GM10248 (cell line): ENCODE measurements at regions of chr15 and their contacts with region 1.

Region 1: DNA sequence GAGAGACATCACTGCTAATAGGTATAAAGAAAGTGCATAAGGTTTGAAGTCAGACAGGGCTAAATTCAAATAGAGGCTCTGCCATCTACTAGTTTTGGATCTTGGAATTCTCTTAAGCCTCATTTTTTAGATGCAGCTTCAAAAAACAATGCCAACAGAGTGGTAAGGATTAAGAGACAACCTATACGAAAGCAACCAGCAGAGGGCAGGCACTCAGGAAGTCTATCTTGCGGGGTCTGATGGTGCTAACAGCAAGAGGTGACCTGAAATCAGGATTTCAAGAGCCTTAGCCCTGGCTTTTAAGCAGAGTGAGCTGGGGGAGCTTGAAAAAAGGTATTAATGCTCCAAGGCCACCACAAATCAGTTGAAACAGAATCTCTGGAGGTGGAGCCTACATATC is 40.7 kb downstream of the LDHAL6B start:
- DNase-seq: no peak
- CTCF ChIP-seq: peak; percentile 54

Region 2: GRCh38 chr15:59199626-59200465 is 47.5 kb before region 1 on chr15:
- CTCF ChIA-PET with region 1: no interaction called
- POLR2A ChIA-PET with region 1: no interaction called
- DNase-seq: no peak
- CTCF ChIP-seq: no peak

Region 3: GRCh38 chr15:59237119-59237855 is 10.1 kb before region 1 on chr15:
- CTCF ChIA-PET with region 1: interaction called, 18 read pairs
- POLR2A ChIA-PET with region 1: no interaction called
- DNase-seq: peak; percentile 50
- CTCF ChIP-seq: no peak

Region 4: DNA sequence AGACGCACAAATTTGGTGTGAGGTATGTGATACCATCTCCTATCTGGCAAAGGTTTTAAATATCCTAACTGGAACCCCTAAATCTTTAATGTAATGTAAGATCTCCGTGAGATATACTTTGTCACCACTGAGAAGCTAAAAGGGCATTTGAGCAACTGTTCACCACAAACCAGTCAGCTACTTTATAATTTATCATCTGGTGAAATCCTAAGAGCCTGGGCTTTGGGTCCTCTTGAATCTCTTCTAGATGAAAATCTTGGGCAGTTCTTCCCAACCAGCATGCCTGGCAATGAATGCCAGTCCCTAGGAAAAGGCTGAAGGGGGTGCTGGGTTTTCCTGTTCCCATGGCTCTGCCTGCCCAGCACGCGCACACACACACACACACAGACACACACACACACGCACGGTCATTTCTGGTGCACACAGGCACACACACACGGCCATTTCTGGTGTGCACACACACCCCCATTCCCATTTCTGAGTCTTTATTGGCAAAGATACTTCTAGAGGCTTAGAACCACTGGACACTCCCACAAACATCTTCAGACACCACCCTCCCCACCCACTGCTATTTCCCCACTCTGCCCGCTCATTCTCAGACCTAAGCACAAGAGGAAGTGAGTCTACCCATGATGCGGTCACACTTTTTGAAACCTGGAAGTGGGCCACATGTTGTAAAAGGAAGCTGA is 52.7 kb after region 1 on chr15:
- CTCF ChIA-PET with region 1: interaction called, 19 read pairs
- POLR2A ChIA-PET with region 1: no interaction called
- DNase-seq: peak; percentile 70
- CTCF ChIP-seq: no peak

Region 5: GRCh38 chr15:59360305-59360704 is 112.9 kb after region 1 on chr15:
- CTCF ChIA-PET with region 1: interaction called, 10 read pairs
- POLR2A ChIA-PET with region 1: no interaction called
- DNase-seq: no peak
- CTCF ChIP-seq: no peak

Region 6: DNA sequence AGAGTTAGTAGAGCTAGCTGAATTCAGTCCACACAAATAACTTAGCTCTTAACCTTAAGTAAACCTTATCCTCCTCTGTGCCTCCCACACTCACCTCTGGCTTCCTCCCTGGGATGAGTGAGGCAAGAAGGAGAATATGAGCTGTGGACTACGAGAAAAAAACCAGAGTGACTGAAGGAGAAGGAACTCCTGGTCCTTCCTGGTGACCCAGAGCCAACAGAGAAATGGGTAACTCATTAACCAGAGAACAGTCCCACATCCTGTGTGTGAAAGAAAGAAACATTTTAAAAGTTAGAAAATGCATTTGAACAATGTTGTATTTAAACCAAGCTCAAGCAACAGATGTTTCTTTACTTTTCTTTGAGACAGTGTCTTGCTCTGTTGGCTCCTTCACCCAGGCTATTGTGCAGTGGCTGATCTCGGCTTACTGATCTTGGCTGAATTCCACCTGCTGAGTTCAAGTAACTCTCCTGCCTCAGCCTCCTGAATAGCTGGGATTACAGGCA is 163.1 kb after region 1 on chr15:
- CTCF ChIA-PET with region 1: interaction called, 29 read pairs
- POLR2A ChIA-PET with region 1: interaction called, 3 read pairs
- DNase-seq: no peak
- CTCF ChIP-seq: no peak

Region 7: DNA sequence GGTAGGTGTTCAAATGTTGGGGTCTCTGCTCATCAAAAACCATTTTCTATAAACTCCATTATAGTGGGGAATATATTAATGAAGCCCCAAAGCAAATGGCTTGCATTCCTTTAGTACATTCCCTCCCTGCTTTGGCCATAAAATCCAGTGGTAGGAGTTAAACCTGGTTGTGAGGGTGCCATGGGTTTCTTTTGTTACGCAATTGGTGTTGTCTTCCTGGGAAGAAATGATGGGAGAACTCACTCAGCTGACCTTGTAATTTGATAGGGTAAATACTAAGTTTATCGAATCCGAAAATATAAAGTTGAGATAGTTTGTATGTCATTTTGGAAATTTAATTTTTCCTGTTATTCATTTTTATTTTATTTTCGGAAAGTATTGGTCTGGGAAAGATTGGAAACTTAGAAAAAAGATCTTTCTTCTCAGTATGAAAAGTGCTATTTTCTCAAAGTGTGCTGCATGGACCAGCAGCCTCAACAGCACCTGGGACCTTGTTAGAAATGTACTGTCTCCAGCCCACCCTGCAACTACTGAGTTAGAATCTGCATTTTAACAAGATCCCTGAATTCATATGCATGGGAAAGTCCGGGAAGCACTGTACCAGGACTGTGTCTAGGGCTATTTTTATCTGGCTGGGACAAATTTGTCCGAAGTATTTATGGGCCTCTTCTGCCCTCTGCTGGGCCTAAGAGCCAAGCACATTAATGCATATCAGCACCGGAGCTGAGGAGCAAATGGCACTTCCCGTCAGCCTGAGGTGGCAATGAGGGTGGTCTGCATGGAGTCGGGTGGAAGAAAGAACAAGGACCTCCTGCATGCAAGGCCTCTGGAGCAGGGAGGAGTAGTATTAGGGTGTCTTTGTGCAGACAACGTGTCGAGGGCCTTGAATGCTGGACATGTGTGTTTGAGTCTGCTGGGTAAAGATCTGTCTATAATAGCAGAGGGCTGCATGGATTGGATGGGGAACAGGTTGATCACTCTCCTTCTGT is 245.3 kb after region 1 on chr15:
- CTCF ChIA-PET with region 1: interaction called, 10 read pairs
- POLR2A ChIA-PET with region 1: no interaction called
- DNase-seq: peak; percentile 56
- CTCF ChIP-seq: peak; percentile 87